ENCODE measurements at regions of chr15 and their contacts with region 1.

Region 1: GRCh38 chr15:76139368-76140073 is 79.7 kb downstream of the TMEM266 start:
- DNase-seq: peak; percentile 87
- H3K4me3 Mint-ChIP-seq: no peak overlapping the region
- H3K27ac Mint-ChIP-seq: no peak overlapping the region
- H3K4me1 Mint-ChIP-seq: peaks cover 10% of the 10 kb centered on the region
- H3K27me3 Mint-ChIP-seq: peaks cover 65% of the 10 kb centered on the region

Region 2: GRCh38 chr15:75809986-75810750 is 329.4 kb before region 1 on chr15:
- CTCF ChIA-PET with region 1: interaction called, 36 read pairs
- DNase-seq: peak; percentile 39
- H3K4me3 Mint-ChIP-seq: no peak overlapping the region
- H3K27ac Mint-ChIP-seq: no peak overlapping the region
- H3K4me1 Mint-ChIP-seq: no peaks in the 10 kb centered on the region
- H3K27me3 Mint-ChIP-seq: peaks cover 48% of the 10 kb centered on the region

Region 3: GRCh38 chr15:76057332-76058000 is 82.1 kb before region 1 on chr15:
- CTCF ChIA-PET with region 1: interaction called, 203 read pairs
- DNase-seq: peak; percentile 57
- H3K4me3 Mint-ChIP-seq: no peak overlapping the region
- H3K27ac Mint-ChIP-seq: no peak overlapping the region
- H3K4me1 Mint-ChIP-seq: peaks cover 15% of the 10 kb centered on the region
- H3K27me3 Mint-ChIP-seq: peaks cover 61% of the 10 kb centered on the region

Region 4: GRCh38 chr15:76065267-76065666 is 74.3 kb before region 1 on chr15:
- CTCF ChIA-PET with region 1: interaction called, 203 read pairs
- DNase-seq: peak; percentile 47
- H3K4me3 Mint-ChIP-seq: no peak overlapping the region
- H3K27ac Mint-ChIP-seq: no peak overlapping the region
- H3K4me1 Mint-ChIP-seq: peaks cover 15% of the 10 kb centered on the region
- H3K27me3 Mint-ChIP-seq: peaks cover 56% of the 10 kb centered on the region

Region 5: DNA sequence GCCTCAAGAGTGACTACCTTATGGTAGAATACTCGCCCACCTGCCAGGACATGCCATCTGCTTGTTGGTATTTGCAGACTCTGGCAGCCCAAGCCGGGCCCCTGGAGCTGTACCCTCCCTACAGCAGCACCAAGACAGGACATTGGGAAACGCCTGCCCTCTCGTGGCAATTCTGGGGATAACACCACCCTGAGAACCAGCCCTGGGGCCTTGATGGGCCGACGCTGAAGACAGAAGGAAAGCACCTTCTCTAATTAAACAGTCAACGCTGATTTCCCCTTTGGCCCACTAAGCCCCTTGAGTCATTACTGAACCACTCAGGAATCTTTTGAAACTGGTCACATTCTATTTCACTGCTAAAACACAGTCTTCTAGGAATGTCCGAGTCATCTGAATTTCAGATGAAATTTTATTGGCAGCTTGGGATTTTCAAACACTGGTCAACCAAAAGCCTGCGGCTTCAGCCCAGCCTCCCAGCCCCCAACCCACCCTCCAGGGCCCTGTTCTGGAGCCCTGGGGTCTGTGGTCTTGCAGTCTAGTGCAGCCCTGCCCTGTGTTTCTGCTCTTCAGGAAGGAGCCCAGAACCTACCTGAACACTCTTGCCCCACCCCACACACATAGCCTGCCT is 11.6 kb after region 1 on chr15:
- CTCF ChIA-PET with region 1: interaction called, 51 read pairs
- DNase-seq: peak; percentile 83
- H3K4me3 Mint-ChIP-seq: no peak overlapping the region
- H3K27ac Mint-ChIP-seq: no peak overlapping the region
- H3K4me1 Mint-ChIP-seq: peaks cover 9% of the 10 kb centered on the region
- H3K27me3 Mint-ChIP-seq: peaks cover 48% of the 10 kb centered on the region